ENCODE measurements at regions of chr6 and their contacts with region 1.

Region 1: GRCh38 chr6:108302386-108302785 is 7.5 kb downstream of the AFG1L start:
- DNase-seq: no peak
- ATAC-seq: no peak

Region 2: DNA sequence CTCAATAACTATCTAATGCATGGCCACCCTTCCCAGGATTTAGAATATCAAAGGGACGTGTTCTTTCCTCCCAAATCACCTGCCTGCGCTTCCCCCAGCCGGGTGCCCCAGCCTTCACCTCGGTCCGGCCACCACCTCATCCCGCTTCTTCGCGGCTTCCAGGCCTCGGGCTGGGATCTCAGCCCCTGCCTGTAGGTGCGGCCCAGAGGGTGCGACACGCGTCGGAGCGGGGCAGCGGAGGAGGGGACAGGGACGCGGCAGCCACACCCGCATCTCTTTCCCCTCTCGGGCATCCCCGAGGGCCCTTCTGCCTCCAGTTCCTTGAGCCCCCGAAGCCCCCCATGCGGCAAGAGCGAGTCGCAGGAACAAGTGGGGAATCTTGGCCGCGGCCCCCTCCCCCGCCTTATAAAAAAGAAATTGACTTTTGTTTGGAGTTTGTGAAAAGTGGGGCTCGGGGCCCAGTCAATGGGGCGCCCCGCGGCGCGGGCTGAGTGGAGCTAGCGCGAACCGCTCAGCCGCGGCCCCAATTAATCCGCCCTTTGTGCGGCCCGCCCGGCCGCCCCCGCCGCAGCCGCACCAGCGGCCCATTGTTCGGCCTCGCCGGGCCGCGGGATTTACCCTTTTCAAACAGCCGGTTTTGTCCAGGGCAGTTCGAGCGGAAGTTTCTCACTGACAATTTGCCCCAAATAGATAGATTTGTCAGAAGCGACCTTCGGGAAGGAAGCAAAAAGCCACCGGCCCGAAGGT is 145.0 kb before region 1 on chr6:
- intact Hi-C with region 1: loop called (anchors 5 kb)
- DNase-seq: no peak
- ATAC-seq: peak; percentile 38

Region 3: DNA sequence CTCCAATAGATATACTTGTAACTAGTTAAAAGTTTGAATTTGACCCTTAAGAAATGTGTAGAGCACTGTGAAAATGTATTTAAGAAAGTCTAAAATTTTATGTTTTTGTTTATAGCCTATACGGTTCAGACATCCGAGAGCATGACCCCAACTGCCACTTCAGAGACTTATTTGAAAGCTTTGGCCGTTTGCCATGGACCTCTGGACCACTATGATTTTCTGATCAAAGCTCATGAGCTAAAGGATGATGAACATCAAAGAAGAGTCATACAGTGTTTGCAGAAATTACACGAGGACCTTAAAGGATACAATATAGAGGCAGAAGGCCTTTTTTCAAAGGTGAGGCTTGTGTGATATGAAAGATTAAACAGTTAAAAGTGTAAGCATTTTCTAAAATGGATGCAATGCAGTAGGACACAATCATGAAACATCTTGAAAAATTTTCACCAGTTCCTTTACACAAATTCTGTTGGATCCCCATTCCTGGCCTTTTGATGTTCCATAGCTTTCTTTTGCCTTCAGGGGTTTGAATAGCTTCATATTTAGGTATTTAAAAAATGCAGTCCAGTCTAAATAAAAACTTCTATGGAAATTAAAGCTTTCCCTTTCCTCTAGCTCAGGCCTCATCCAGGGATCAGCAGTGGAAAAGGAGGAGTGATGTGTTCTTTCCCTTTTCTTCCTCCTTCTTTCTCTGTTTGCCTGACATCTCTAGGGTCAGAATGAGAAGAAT is 21.5 kb after region 1 on chr6:
- intact Hi-C with region 1: no loop called
- DNase-seq: no peak
- ATAC-seq: no peak

Measured in sciatic nerve (tissue), 2 donors.